A549 (cell line): ENCODE measurements at regions of chr1 and their contacts with region 1.

Region 1: GRCh38 chr1:206489980-206490770 is 17.2 kb upstream of the RASSF5 start:
- DNase-seq: peak; percentile 71 to 93
- ATAC-seq: peak; percentile 90 to 97
- H3K4me3 ChIP-seq: no peak overlapping the region
- H3K27ac ChIP-seq: no peak overlapping the region
- H3K4me1 ChIP-seq: no peaks in the 10 kb centered on the region
- CTCF ChIP-seq: peak; percentile 89
- EP300 ChIP-seq: no peak
- POLR2A ChIP-seq: no peak
- RAD21 ChIP-seq: peak; percentile 84 to 93

Region 2: DNA sequence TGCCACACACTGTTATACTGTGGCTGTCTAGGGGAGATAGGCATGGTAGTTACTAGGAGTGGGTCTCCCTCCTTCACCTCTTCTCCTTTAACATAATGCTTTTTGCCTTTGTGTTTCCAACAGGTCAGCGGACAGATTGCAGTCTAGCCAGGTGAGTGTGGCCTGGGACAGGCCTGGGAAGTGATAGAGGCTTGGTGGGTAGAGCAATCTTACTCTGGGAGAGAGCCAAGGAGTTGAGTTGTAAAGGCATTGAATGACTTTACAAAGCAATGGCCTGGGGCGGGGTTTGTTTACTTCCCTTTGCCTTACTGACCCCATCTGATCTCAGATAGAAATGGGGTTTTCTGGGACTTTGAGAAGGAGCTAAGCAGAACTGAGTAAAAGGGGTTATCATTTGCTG is 70.9 kb before region 1 on chr1:
- CTCF ChIA-PET with region 1: no interaction called
- POLR2A ChIA-PET with region 1: no interaction called
- DNase-seq: no peak
- ATAC-seq: no peak
- H3K4me3 ChIP-seq: no peak overlapping the region
- H3K27ac ChIP-seq: no peak overlapping the region
- H3K4me1 ChIP-seq: 0 out of 3 replicates have a peak, but pooled peaks cover 3% of the 10 kb centered on the region
- CTCF ChIP-seq: no peak
- EP300 ChIP-seq: no peak
- POLR2A ChIP-seq: no peak
- RAD21 ChIP-seq: no peak

Region 3: DNA sequence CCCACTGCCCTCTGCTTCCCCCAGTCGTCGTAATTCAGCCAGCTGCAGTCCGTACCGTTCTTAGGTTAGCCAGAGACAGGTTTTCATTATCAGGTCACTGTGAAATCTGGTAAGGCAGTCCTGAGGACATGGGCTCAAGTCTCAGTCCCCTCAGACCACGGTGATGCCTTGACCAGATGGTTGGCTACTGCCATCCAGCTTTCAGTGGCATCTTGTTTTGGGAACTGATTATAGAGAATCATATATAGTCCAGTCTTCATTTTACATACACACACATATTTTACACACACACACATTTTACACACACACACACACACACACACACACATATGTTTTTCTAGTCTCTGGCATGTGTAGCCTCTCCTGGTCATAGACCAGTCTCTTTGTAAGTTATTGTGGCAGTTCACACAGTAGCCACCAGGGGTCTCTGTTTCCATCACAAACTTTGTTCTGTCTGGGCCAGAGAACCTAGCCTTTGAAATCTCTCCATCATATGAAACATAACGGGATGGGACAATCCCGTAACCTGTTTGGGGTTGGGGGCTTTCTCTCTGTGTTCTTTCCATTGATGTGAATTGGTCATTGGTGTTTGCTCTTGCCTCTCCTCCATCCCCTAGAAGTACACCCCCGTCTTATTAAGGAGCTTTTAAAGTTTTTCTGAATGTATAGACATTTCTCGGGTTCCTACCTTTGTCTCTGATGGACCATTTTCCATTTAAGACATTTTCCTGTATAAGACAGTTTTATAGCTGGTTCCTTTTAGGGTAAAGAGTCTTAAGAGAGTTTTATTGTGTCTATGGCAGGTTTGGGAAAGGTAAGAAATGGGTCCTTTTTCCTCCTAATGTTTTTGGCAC is 28.3 kb before region 1 on chr1:
- CTCF ChIA-PET with region 1: interaction called, 10 read pairs
- POLR2A ChIA-PET with region 1: no interaction called
- DNase-seq: peak; percentile 66 to 77
- ATAC-seq: peak; percentile 72 to 91
- H3K4me3 ChIP-seq: no peak overlapping the region
- H3K27ac ChIP-seq: no peak overlapping the region
- H3K4me1 ChIP-seq: peaks cover 12% of the 10 kb centered on the region; the same call in 2 of the 3 replicates
- CTCF ChIP-seq: peak; percentile 78
- EP300 ChIP-seq: no peak
- POLR2A ChIP-seq: no peak
- RAD21 ChIP-seq: peak; percentile 45 to 58

Region 4: GRCh38 chr1:206479183-206480125 is 10.7 kb before region 1 on chr1:
- CTCF ChIA-PET with region 1: interaction called, 61 read pairs
- POLR2A ChIA-PET with region 1: no interaction called
- DNase-seq: peak; percentile 74 to 91
- ATAC-seq: peak; percentile 70 to 86
- H3K4me3 ChIP-seq: no peak overlapping the region
- H3K27ac ChIP-seq: no peak overlapping the region
- H3K4me1 ChIP-seq: peaks cover 11% of the 10 kb centered on the region
- CTCF ChIP-seq: peak; percentile 80
- EP300 ChIP-seq: no peak
- POLR2A ChIP-seq: no peak
- RAD21 ChIP-seq: peak; percentile 72 to 75

Region 5: DNA sequence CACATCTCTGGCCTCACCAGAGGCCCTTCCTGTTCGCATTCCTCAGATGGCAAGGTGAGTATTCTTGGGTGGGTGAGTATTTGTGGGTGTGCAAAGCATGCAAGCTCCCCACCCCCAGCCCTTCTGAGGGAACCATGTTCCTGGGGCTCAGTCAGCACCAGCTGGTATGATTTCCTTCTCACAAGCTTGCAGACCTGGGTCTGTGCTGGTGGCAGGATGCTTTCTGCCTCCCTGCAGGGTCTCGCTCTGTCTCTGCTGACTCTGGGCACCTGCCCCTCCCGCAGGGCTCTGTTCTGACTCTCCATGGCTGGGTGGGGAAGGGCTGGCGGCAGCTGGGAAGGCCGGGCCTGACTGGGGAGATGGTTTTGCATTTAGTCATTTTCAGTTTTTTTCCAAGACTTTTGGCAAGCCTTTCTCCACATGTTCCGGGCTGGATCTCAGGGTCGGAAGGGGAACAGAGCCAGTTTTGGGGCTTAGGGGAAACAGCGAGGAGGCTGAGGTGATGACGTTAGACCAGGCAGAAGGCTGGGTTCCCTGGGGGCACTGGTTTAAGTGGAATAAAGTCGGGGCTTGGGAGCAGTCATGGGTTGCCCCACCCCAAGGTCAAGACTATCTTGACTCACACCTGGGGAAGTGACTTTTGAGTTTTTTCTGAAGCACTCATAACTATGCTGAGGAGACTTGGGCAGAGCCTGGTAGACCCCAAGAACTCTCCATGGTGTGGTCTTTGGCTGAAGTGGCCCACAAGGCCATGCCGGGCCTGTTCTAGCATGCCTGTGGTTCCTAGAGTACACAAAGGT is 23.3 kb after region 1 on chr1:
- CTCF ChIA-PET with region 1: interaction called, 14 read pairs
- POLR2A ChIA-PET with region 1: no interaction called
- DNase-seq: no peak
- ATAC-seq: peak; percentile 42 to 60; a peak in 4 of 6 replicates
- H3K4me3 ChIP-seq: no peak overlapping the region
- H3K27ac ChIP-seq: peak overlapping the region; percentile 39 to 55; a peak in 3 of 6 replicates
- H3K4me1 ChIP-seq: peaks cover 16% of the 10 kb centered on the region
- CTCF ChIP-seq: no peak
- EP300 ChIP-seq: no peak
- POLR2A ChIP-seq: no peak
- RAD21 ChIP-seq: no peak

Region 6: GRCh38 chr1:206563367-206564207 is 73.4 kb after region 1 on chr1:
- CTCF ChIA-PET with region 1: interaction called, 12 read pairs
- POLR2A ChIA-PET with region 1: no interaction called
- DNase-seq: no peak
- ATAC-seq: no peak
- H3K4me3 ChIP-seq: no peak overlapping the region
- H3K27ac ChIP-seq: no peak overlapping the region
- H3K4me1 ChIP-seq: peaks cover 6% of the 10 kb centered on the region; the same call in 1 of the 3 replicates
- CTCF ChIP-seq: no peak
- EP300 ChIP-seq: no peak
- POLR2A ChIP-seq: no peak
- RAD21 ChIP-seq: no peak

Region 7: DNA sequence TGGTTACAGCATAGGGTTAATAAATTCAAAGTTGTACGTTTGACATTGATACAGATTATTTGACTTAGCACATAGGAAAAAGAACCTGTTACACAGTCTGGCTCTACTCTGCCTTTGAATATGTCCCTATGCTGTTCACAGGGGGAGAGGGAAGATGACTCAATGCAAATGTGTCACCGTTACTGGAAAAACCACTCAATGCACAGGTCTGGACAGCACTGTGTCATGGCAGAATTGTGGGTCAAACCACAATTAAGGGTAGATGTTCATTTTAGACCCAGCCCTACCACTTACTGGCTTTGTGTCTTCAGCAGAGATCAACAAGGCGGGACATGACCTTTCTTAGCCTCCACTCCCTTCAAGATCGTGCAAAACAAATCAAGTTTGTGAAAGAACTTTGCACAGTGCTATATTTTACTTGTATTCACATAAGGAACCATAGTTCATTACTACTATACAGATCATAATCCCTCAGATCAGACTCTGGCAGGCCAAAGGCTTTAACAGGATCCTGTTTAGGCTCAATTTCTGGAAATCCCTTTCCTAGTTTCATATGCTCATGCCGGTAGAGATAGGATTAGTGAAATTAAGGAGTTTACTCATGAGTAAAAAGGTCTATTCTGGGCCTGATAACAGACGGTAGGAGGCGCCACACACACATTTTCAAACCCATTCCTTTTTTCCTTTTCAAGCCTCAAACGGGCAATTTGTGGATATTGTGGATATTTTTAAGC is 100.0 kb after region 1 on chr1:
- CTCF ChIA-PET with region 1: interaction called, 188 read pairs
- POLR2A ChIA-PET with region 1: no interaction called
- DNase-seq: no peak
- ATAC-seq: peak in 1 of 2 experiments; percentile 43; a peak in 1 of 6 replicates
- H3K4me3 ChIP-seq: no peak overlapping the region
- H3K27ac ChIP-seq: no peak overlapping the region
- H3K4me1 ChIP-seq: no peaks in the 10 kb centered on the region
- CTCF ChIP-seq: peak; percentile 32
- EP300 ChIP-seq: no peak
- POLR2A ChIP-seq: no peak
- RAD21 ChIP-seq: peak in 1 of 2 experiments; percentile 31; a peak in 2 of 5 replicates

Region 8: DNA sequence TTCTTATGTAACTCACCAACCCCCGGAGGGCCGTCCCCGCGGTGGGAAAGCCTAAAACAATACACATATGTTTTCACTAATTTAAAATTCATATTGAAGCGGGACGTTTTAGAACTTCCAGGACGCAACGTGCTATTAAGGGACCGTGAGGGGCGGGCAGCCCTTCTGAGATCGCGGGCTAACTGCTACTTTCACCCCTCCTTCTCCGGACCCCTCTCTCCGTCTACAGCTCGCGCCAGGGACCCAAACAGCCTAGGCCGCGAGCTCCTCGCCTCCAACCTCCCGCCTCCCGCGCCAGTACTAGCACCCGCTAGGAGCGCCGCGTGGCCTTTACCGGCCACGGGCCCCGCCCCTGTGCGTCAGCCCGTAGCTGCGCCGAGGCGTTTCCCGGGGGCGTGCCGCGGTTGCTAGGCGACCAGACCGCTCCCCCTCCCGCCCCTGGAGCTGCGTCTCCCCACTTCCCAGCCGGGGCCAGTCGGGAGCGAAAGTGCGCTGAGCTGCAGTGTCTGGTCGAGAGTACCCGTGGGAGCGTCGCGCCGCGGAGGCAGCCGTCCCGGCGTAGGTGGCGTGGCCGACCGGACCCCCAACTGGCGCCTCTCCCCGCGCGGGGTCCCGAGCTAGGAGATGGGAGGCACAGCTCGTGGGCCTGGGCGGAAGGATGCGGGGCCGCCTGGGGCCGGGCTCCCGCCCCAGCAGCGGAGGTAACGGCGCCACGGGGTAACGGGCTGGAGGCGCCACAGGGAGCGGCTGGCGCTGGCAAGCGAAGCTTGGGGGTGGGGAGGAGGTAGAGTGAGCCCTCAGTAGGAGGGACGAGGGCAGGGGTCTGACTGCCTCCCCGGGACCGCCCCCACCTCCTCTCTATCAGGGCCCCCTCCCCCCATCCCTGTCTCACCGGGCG is 145.2 kb after region 1 on chr1 and contains the start of gene DYRK3:
- CTCF ChIA-PET with region 1: interaction called, 11 read pairs
- POLR2A ChIA-PET with region 1: no interaction called
- DNase-seq: peak; percentile 87 to 93
- ATAC-seq: peak; percentile 91 to 95
- H3K4me3 ChIP-seq: peak within 1 kb of the TSS; percentile 91
- H3K27ac ChIP-seq: peak within 1 kb of the TSS; percentile 88 to 89
- H3K4me1 ChIP-seq: peaks cover 32% of the 10 kb centered on the region; the same call in 2 of the 3 replicates
- CTCF ChIP-seq: no peak
- EP300 ChIP-seq: no peak
- POLR2A ChIP-seq: peak; percentile 91
- RAD21 ChIP-seq: no peak; a peak in 1 of 5 replicates
- polyA plus RNA-seq, gene DYRK3: 7.3 and 9.3 TPM in 2 replicates

Region 9: GRCh38 chr1:206706298-206706791 is 216.2 kb after region 1 on chr1:
- CTCF ChIA-PET with region 1: no interaction called
- POLR2A ChIA-PET with region 1: no interaction called
- DNase-seq: no peak
- ATAC-seq: no peak
- H3K4me3 ChIP-seq: no peak overlapping the region
- H3K27ac ChIP-seq: peak overlapping the region; percentile 30 to 74; a peak in 3 of 6 replicates
- H3K4me1 ChIP-seq: peaks cover 72% of the 10 kb centered on the region
- CTCF ChIP-seq: no peak
- EP300 ChIP-seq: no peak
- POLR2A ChIP-seq: no peak
- RAD21 ChIP-seq: no peak

Region 10: DNA sequence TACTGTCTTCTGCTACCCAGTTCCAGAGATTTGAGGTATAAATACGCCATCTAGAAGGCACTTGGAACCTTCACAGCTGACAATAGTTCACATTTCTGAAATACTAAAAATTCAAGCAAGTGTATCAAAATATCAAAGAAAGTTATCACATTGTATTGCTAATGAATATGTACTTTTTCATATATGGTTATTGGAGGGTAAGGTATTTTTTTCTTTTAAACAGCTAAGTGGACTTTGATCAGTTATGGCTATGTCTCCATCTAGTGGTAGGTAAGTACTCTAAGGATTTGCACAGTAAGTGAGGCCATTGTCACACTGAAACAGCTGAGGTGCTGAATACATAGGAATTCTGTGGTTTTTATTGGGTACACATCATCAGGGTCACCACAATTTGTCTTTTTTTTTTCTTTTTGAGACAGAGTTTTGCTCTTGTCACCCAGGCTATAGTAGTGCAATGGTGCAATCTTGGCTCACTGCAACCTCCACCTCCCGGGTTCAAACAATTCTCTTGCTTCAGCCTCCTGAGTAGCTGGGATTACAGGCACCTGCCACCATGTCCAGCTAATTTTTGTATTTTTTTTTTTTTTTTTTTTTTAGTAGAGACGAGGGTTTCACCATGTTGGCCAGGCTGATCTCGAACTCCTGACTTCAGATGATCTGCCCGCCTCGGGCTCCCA is 914.8 kb after region 1 on chr1:
- CTCF ChIA-PET with region 1: no interaction called
- POLR2A ChIA-PET with region 1: no interaction called
- DNase-seq: peak; percentile 68 to 77
- ATAC-seq: peak; percentile 92 to 93
- H3K4me3 ChIP-seq: no peak overlapping the region
- H3K27ac ChIP-seq: no peak overlapping the region
- H3K4me1 ChIP-seq: no peaks in the 10 kb centered on the region; the same call in 2 of the 3 replicates
- CTCF ChIP-seq: peak; percentile 94
- EP300 ChIP-seq: no peak
- POLR2A ChIP-seq: no peak
- RAD21 ChIP-seq: peak; percentile 90 to 92